ENCODE measurements at regions of chr2 and their contacts with region 1.

Region 1: GRCh38 chr2:158818511-158818910 is 23.4 kb downstream of the DAPL1 start:
- DNase-seq: no peak
- ATAC-seq: peak; percentile 83

Region 2: DNA sequence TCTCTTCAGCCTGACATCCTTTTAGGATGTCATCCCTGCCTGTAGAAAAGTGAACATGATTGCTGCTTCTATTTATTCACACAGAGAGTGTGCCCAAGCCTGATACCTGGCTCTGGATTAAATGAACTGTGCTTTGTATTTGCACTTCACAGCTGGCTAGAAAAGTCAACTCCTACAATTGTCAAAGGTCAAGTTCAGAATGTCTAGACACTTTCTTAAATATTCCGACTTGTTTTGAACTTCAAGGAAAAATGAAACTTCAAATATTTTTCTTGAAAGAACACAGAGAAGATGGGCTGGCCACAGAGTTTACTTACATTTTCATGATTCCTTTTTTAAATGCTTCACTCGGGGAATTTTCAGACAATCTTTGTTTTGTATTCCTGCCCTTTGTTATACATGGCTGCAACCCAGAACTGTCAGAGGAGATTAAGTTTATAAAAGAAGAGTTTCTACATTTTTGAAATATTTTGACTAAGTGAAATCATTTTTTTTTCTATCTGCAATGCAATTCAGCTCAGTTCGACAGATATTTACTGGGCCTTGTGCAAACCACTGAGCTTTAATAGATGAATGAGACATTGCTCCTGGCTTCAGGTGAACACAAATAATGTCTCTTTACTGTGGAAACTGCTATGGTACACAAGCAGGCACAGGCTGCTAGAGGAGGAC is 10.1 kb after region 1 on chr2:
- intact Hi-C with region 1: loop called (anchors 2 kb)
- DNase-seq: no peak
- ATAC-seq: peak; percentile 62

Region 3: DNA sequence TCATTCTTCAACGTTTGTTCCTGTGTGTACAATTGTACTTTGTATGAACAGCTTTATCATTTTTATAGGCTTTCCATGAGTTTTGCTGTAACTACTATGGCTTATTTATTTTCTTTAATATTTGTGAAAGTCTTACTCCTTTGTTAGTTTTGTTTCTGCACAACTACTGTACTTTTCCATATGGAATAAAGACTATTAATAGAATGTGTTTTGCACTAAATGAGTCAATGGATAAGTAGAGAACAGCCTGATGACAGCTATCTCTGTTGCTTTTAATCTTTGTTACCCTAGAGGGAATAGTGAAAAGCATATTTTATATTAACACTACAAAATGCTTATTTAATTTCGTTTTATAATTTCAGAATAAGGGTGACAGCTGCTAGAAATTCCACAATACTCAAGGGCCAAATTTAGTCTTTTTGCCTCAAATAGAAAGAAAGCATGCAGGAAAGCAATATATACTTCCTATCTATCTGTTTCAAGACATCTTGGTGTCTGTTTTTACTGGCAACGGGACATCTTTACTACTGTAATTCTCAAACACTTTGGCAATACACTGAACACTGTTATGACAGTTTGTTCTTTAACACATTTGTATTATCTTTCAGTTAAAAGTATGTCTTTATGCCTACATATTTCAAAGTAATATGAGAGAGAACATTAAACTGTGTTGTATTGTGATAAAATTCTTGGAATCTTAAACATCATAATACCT is 414.1 kb after region 1 on chr2:
- intact Hi-C with region 1: no loop called
- DNase-seq: no peak
- ATAC-seq: no peak

Measured in sciatic nerve (tissue), 2 donors.